MCF 10A (cell line): ENCODE measurements at regions of chr21 and their contacts with region 1.

Region 1: GRCh38 chr21:30117631-30118030 is 49.0 kb downstream of the CLDN17 start:
- DNase-seq: no peak
- H3K4me3 Mint-ChIP-seq: no peak overlapping the region
- H3K27ac Mint-ChIP-seq: no peak overlapping the region
- H3K4me1 Mint-ChIP-seq: no peaks in the 10 kb centered on the region
- H3K27me3 Mint-ChIP-seq: no peaks in the 10 kb centered on the region
- CTCF ChIP-seq: no peak

Region 2: GRCh38 chr21:30083225-30083945 is 34.2 kb before region 1 on chr21:
- CTCF ChIA-PET with region 1: no interaction called
- POLR2A ChIA-PET with region 1: no interaction called
- intact Hi-C with region 1: no loop called
- DNase-seq: no peak
- H3K4me3 Mint-ChIP-seq: no peak overlapping the region
- H3K27ac Mint-ChIP-seq: no peak overlapping the region
- H3K4me1 Mint-ChIP-seq: no peaks in the 10 kb centered on the region
- H3K27me3 Mint-ChIP-seq: no peaks in the 10 kb centered on the region
- CTCF ChIP-seq: no peak

Region 3: DNA sequence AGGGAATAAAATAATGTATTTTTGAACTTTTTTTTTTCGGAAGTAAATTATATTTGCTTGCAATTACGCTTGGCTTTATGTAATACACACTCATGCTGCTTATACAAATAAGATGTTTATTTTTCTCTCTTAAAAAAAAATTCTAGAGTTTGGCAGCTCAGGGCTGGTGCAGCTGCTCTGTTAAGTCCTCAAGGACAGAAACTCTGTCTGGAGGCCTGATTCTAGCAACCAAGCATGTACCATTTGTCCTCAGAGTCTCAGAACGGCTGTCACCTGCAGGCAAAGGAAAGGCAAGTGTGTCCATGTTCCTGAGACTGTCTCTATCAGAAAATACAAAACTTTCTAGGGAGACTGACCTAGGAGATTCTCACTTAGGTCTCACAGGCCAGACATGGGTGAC is 72.1 kb after region 1 on chr21:
- CTCF ChIA-PET with region 1: no interaction called
- POLR2A ChIA-PET with region 1: no interaction called
- intact Hi-C with region 1: loop called (anchors 2 kb)
- DNase-seq: no peak
- H3K4me3 Mint-ChIP-seq: no peak overlapping the region
- H3K27ac Mint-ChIP-seq: no peak overlapping the region
- H3K4me1 Mint-ChIP-seq: no peaks in the 10 kb centered on the region
- H3K27me3 Mint-ChIP-seq: no peaks in the 10 kb centered on the region
- CTCF ChIP-seq: no peak